ENCODE measurements at regions of chr14 and their contacts with region 1.

Region 1: GRCh38 chr14:99683619-99684355 is at the start of gene CYP46A1:
- DNase-seq: peak; percentile 99 to 100 (median 100)
- H3K4me3 ChIP-seq: peak within 1 kb of the TSS; percentile 74 to 97 (median 91)
- H3K27ac ChIP-seq: peak within 1 kb of the TSS in 55 of 59 donors; percentile 13 to 92 (median 81)
- H3K27me3 ChIP-seq: no peaks in the 10 kb centered on the region
- CTCF ChIP-seq: peak in 22 of 56 donors; percentile 1 to 30 (median 16)
- total RNA-seq, gene CYP46A1: 26.0 to 165 (median 81.5) TPM

Region 2: DNA sequence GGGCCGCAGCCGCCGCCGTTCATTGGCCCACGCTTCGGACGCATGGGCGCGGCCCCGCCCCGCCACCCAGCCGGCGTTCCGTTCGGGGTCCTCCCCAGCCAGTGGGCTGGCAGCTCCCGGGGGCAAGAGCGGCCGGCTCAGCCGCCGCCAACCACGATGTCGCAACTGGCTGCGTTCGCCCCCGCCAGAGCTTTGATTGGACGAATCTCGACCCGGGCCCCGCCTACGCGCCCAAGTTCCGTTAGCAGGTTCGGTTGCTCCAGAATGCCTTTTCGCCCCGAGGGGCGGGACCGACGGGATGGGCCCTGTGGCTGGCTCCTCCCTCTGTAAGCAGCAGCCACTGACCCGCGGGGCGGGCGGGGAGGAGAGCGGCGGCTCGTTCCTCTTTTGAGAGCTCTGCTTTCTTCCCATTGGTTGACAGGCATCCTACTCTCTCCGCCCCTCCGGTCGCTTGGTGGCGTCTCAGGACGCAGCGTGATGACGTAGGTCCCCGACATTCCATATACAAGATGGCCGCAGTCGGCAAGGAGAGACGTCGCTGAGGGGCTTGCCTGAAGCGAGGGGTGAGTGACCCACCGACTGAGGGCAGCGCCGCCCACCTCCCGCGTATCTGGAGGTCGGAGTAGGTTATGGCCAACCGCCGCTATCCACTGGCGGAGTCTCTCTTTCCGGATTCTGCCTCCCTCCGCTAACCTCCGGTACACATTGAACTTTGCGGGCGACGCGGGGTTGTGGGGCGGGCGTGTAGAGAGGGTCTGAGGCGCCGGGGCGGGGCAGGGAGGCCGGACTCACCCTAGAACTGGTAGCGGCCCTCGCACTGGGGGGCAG is 202.7 kb before region 1 on chr14 and contains the start of gene CCNK:
- intact Hi-C with region 1: loop called in 1 of 2 experiments (anchors 5 kb)
- DNase-seq: peak; percentile 100
- H3K4me3 ChIP-seq: peak within 1 kb of the TSS; percentile 60 to 100 (median 94)
- H3K27ac ChIP-seq: peak within 1 kb of the TSS in 54 of 59 donors; percentile 23 to 94 (median 81)
- H3K27me3 ChIP-seq: no peaks in the 10 kb centered on the region
- CTCF ChIP-seq: peak in 21 of 56 donors; percentile 6 to 51 (median 23)
- total RNA-seq, gene CCNK: 22.8 to 44.3 (median 33.3) TPM

Region 3: DNA sequence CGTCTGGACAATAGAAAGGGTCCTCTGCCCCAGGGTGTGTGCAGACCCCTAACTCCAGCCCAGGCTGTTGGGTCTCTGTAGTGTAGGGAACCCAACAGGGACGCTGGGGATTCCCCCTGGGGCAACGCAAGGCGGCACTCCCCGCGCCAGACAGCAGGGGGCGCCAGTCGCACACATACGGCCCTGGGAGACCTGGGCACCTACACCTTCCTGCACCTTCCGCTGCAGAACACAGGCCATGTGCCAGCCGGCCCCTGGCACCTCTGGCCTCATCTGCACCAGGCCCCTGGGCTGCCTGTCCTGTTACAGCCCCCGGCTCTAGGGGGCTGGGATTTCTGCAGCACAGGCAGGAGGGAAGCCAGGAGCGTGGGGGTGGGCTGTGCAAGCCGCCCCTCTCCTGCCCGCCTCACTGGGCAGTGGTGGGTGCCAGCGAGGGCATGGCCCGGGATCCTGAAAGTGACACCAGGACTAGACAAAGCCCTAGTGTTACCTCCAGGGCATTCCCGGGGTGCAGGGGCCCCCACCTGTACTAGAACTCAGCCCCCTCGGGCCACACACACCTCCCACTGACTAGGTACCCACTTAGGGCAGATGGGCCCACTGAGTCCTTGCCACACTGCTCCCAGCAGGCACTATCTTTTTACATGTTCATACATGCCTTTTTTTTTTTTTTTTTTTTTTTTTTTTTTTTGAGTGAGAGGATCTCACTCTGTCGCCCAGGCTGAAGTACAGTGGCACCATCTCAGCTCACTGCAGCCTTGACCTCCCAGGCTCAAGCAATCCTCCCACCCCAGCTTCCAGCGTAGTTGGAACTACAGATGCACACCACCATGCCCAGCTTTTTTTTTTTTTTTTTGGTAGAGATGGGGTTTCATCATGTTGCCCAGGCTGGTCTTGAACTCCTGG is 165.1 kb before region 1 on chr14:
- intact Hi-C with region 1: loop called in 1 of 2 experiments (anchors 5 kb)
- DNase-seq: peak; percentile 51 to 85 (median 71)
- H3K4me3 ChIP-seq: no peak overlapping the region
- H3K27ac ChIP-seq: peak overlapping the region in 2 of 59 donors; percentile 31 to 45
- H3K27me3 ChIP-seq: no peaks in the 10 kb centered on the region
- CTCF ChIP-seq: peak; percentile 86 to 100 (median 98)

Region 4: GRCh38 chr14:99698642-99699041 is 14.9 kb after region 1 on chr14:
- intact Hi-C with region 1: no loop called
- DNase-seq: peak in 1 of 10 donors; percentile 14
- H3K4me3 ChIP-seq: no peak overlapping the region
- H3K27ac ChIP-seq: no peak overlapping the region
- H3K27me3 ChIP-seq: no peaks in the 10 kb centered on the region
- CTCF ChIP-seq: no peak

Measured in dorsolateral prefrontal cortex (tissue), 120 donors.